Activated T-helper 2 cell treated with anti-CD3 and anti-CD28 coated beads, Interferon-gamma antibody, Interleukin-2, Interleukin-4, amounts not matched to agents 10 μg/mL and 5 μg/mL and 100 μg/mL, durations not matched to agents 14 hours and 24 hours and 36 hours (primary cell): ENCODE measurements at regions of chr4 and their contacts with region 1.

Region 1: GRCh38 chr4:146175541-146176453 is at the start of gene LSM6:
- DNase-seq: peak; percentile 78
- H3K4me3 Mint-ChIP-seq: peak within 1 kb of the TSS; percentile 86
- H3K27ac Mint-ChIP-seq: peak within 1 kb of the TSS; percentile 71
- H3K4me1 Mint-ChIP-seq: peaks cover 37% of the 10 kb centered on the region
- H3K27me3 Mint-ChIP-seq: no peaks in the 10 kb centered on the region
- total RNA-seq, gene LSM6: 67.2 and 74.1 TPM in 2 replicates

Region 2: DNA sequence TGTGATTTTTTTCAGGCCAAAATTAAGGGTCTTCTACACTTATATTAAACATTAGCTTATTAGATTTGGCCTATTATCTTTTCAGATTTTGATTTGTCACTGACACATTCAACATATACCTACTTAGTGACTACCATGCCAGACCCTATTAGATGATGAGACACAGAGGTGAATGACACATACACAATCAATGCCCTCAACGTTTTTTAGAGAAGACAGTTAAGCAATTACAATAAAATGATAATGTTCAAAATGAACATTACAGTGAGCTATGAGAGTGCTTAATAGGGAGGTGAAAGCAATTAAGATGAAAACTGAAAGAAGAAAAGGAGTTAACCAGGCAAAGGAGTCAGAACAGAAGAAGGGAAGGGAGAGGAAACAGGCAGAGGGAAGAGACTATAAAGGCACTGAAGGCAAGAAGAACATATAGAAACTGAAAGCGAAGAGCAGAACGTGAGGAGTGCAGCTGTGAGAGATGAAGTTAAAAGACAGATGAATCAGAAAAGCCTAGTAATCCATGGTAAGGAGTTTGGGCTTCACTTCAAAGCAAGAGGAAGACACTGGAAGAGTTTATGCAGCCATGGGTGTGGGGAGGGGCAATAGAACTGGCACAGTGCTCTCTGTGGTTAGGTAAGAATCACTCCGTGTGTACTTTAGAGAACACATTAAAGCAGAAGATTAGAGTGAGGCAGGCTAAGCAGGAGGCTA is 157.5 kb after region 1 on chr4:
- intact Hi-C with region 1: loop called (anchors 5 kb)
- DNase-seq: no peak
- H3K4me3 Mint-ChIP-seq: no peak overlapping the region
- H3K27ac Mint-ChIP-seq: no peak overlapping the region
- H3K4me1 Mint-ChIP-seq: no peaks in the 10 kb centered on the region
- H3K27me3 Mint-ChIP-seq: no peaks in the 10 kb centered on the region